ENCODE measurements at regions of chr5 and their contacts with region 1.

Region 1: GRCh38 chr5:148186248-148186996 is 16.4 kb upstream of the SPINK6 start:
- DNase-seq: no peak
- ATAC-seq: no peak

Region 2: DNA sequence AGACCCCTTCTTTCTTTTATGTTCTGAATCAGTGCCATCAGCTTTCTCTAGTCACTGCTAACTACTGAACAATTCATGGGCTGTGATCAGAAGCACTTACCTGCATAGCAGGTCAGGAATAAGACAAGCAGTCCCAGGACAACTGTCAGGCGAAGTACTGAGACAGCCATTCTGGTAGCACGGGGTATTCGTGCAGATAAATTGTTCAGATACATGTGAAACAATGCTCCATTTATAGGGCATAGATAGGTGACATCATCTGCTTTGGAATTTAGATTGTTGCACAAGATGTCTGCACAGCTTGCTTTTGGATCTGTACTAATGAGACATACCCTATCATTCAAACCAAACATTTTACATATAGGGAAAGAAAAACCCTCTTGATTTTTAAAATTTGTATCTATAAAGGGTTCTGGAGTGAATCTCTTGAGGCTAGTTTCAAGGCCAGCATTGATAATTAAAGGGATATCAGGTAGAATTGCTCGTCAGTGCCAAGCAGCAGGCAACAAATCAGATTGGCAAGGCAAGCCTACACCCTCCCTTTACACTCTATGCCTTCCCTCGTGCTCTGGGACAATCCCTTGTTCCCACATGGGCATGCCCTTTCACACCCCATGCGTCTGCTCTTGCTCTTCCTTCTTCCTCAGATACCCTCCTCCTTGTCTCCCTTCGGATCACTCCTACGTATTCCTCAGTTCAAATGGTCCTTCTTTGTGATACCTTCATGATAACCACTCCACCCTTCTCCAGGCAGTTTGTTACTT is 279.9 kb before region 1 on chr5 and contains the start of gene C5orf46:
- intact Hi-C with region 1: no loop called
- DNase-seq: no peak
- ATAC-seq: no peak
- total RNA-seq, gene C5orf46: not detected

Region 3: GRCh38 chr5:148374692-148375360 is 188.4 kb after region 1 on chr5:
- intact Hi-C with region 1: loop called in 1 of 2 experiments (anchors 10 kb)
- DNase-seq: peak in 1 of 2 donors; percentile 11
- ATAC-seq: peak; percentile 87